Activated CD4-positive, alpha-beta memory T cell treated with anti-CD3 and anti-CD28 coated beads, Interleukin-2, amount 10 ng/mL, durations not matched to agents 7 days and 5 days (primary cell): ENCODE measurements at regions of chr2 and their contacts with region 1.

Region 1: GRCh38 chr2:41840702-41841551 is 206.9 kb upstream of the PKDCC start:
- DNase-seq: peak; percentile 98
- H3K4me3 Mint-ChIP-seq: peak overlapping the region; percentile 81
- H3K27ac Mint-ChIP-seq: peak overlapping the region; percentile 44
- H3K4me1 Mint-ChIP-seq: peaks cover 10% of the 10 kb centered on the region
- H3K27me3 Mint-ChIP-seq: peaks cover 21% of the 10 kb centered on the region

Region 2: GRCh38 chr2:41821167-41821566 is 19.8 kb before region 1 on chr2:
- CTCF ChIA-PET with region 1: no interaction called
- POLR2A ChIA-PET with region 1: no interaction called
- DNase-seq: no peak
- H3K4me3 Mint-ChIP-seq: no peak overlapping the region
- H3K27ac Mint-ChIP-seq: no peak overlapping the region
- H3K4me1 Mint-ChIP-seq: no peaks in the 10 kb centered on the region
- H3K27me3 Mint-ChIP-seq: peaks cover 7% of the 10 kb centered on the region

Region 3: GRCh38 chr2:41853427-41854216 is 12.7 kb after region 1 on chr2:
- CTCF ChIA-PET with region 1: interaction called, 12 read pairs
- POLR2A ChIA-PET with region 1: interaction called, 8 read pairs
- DNase-seq: no peak
- H3K4me3 Mint-ChIP-seq: no peak overlapping the region
- H3K27ac Mint-ChIP-seq: no peak overlapping the region
- H3K4me1 Mint-ChIP-seq: no peaks in the 10 kb centered on the region
- H3K27me3 Mint-ChIP-seq: peaks cover 17% of the 10 kb centered on the region

Region 4: DNA sequence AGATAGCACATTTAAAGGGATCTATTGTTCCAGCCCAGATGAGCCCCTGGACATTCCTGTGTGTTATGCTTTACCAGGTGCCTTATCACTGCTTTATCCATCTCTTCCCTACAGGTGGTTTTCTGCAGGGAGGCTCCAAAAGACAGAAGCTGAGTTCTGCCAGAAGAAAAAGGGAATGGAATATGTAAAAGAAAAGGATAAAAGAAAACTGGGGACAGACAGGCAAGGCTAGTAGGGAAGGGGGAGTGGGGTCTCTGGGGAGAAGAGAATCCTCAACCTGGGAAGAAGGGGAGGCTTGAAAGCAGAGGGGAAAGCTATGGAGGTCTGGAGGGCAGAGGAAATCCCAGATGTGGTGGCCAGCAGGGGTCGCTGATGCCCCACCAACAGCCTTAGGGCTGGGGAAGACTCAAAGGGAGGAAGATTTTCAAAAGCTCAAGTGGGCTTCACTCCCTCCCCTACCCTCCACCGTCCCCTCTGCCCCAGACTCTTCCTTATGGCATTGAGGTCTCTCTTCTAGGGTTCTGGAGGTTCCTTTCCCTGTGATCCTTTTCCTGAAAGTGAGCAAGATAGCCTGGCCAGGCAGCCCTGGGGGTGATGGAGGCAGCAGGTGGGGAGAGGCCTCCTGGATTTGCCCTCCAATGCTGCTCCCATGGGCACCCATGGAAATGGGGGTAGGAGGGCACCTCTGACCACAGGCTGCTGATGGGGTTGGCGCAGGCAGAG is 28.8 kb after region 1 on chr2:
- CTCF ChIA-PET with region 1: interaction called, 13 read pairs
- POLR2A ChIA-PET with region 1: no interaction called
- DNase-seq: peak; percentile 73
- H3K4me3 Mint-ChIP-seq: no peak overlapping the region
- H3K27ac Mint-ChIP-seq: no peak overlapping the region
- H3K4me1 Mint-ChIP-seq: peaks cover 18% of the 10 kb centered on the region
- H3K27me3 Mint-ChIP-seq: peaks cover 16% of the 10 kb centered on the region

Region 5: DNA sequence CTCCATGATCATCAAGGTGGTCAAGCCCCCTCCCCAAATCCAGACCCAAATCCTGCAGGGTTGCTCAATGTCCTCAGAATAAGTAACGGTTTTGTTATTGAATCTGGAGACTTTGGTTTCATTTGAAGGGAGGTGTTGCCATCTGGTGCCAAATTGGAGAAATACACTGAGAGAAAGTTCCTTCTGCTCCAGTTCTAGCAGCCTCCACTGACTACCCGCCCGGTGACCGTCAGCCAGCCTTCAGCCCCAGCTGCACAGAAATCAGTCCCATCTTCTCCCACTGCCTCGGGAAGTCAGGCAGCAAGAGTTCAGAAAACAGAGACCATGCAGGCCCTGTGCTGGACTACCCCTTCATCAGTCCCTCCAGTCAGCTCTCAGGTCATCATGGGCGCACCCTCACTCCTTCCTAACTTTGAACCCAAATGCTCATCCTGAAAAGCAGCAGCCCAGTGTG is 245.6 kb after region 1 on chr2:
- CTCF ChIA-PET with region 1: interaction called, 33 read pairs
- POLR2A ChIA-PET with region 1: interaction called, 4 read pairs
- DNase-seq: peak; percentile 44
- H3K4me3 Mint-ChIP-seq: no peak overlapping the region
- H3K27ac Mint-ChIP-seq: no peak overlapping the region
- H3K4me1 Mint-ChIP-seq: peaks cover 9% of the 10 kb centered on the region
- H3K27me3 Mint-ChIP-seq: peaks cover 23% of the 10 kb centered on the region